Activated naive CD4-positive, alpha-beta T cell treated with anti-CD3 and anti-CD28 coated beads for 36 hours (primary cell): ENCODE measurements at regions of chr22 and their contacts with region 1.

Region 1: DNA sequence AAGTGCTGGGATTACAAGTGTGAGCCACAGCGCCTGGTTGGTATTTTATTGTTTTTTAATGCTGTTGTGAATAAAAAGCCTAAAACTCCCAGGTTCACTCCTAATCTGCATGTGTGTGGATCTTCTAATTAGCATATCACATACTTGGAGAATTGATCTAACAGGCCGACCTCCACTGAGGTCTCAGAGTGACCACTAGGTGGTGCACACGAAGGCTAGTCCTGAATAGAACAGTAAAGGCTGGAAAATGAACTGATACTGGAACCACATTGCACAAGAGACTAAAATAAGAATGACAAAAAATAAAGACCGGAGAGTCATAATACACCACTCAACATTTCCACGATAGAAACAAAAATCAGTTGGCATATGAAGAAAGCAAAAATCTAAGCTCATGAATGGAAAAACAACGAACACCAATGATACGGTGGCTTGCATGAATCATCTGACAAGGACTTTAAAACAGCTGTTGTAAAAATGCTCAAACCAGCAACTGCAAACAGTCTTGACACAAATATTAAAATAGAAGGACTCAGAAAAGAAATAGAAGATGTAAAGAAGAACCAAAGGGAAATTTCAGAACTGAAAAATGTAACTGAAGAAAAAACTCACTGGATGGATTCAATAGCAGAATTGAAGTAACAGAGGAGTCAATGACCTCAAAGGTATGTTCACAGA is 19.2 kb downstream of the PIM3 start:
- DNase-seq: peak; percentile 58
- H3K4me3 Mint-ChIP-seq: no peak overlapping the region
- H3K27ac Mint-ChIP-seq: peak overlapping the region; percentile 65
- H3K4me1 Mint-ChIP-seq: peaks cover 47% of the 10 kb centered on the region
- H3K27me3 Mint-ChIP-seq: peaks cover 2% of the 10 kb centered on the region

Region 2: DNA sequence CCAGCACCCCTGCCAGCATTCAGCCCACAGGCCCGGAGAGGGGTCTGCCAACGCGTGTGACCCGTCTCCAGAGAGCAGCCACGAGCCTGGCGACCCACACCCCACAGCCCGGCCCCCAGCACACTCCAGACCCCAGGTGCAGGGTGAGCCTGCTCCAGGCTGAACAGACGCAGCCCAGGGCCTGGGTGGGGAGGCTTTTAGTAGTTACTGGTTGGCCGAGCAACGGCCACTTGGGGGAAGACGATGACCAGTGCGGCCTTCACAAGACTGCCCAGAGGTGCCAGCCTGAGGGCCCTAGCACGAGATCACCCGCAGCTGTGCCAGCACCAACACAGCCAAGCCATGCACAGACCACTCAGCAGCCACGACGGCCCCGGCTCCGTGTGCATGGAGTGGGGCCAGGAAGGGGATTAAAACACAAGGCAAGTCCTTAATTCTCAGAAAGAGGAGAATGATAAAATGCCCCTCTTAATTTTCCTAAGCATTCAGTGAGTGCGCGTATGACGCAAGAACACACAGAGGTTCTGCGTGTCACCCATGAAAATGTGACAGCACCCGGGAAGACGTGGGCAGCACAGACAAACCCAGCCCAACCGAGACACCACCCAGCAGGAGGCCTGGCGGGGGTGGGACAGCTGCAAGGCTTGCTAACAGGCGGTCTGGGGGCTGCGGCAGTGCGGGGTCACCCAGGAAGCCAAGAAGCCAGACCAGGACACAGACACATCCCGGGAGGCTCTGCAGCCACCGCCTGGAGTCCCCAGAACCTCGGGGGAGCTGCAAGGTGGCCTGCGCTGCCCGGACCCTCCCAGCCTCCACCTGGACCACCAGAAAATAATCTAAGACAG is 199.7 kb before region 1 on chr22:
- CTCF ChIA-PET with region 1: no interaction called
- intact Hi-C with region 1: no loop called
- DNase-seq: no peak
- H3K4me3 Mint-ChIP-seq: no peak overlapping the region
- H3K27ac Mint-ChIP-seq: peak overlapping the region; percentile 30
- H3K4me1 Mint-ChIP-seq: peaks cover 8% of the 10 kb centered on the region
- H3K27me3 Mint-ChIP-seq: no peaks in the 10 kb centered on the region

Region 3: GRCh38 chr22:49838771-49839717 is 140.7 kb before region 1 on chr22:
- CTCF ChIA-PET with region 1: no interaction called
- intact Hi-C with region 1: loop called (anchors 5 kb)
- DNase-seq: peak; percentile 90
- H3K4me3 Mint-ChIP-seq: peak overlapping the region; percentile 67
- H3K27ac Mint-ChIP-seq: peak overlapping the region; percentile 85
- H3K4me1 Mint-ChIP-seq: peaks cover 31% of the 10 kb centered on the region
- H3K27me3 Mint-ChIP-seq: no peaks in the 10 kb centered on the region

Region 4: GRCh38 chr22:49936018-49936952 is 43.4 kb before region 1 on chr22:
- CTCF ChIA-PET with region 1: interaction called, 3 read pairs
- intact Hi-C with region 1: loop called (anchors 2 kb)
- DNase-seq: peak; percentile 99
- H3K4me3 Mint-ChIP-seq: peak overlapping the region; percentile 57
- H3K27ac Mint-ChIP-seq: peak overlapping the region; percentile 90
- H3K4me1 Mint-ChIP-seq: peaks cover 33% of the 10 kb centered on the region
- H3K27me3 Mint-ChIP-seq: no peaks in the 10 kb centered on the region

Region 5: GRCh38 chr22:49960159-49961004 is 19.3 kb before region 1 on chr22 and contains the start of gene PIM3:
- CTCF ChIA-PET with region 1: interaction called, 3 read pairs
- intact Hi-C with region 1: loop called (anchors 2 kb)
- DNase-seq: peak; percentile 94
- H3K4me3 Mint-ChIP-seq: peak within 1 kb of the TSS; percentile 91
- H3K27ac Mint-ChIP-seq: peak within 1 kb of the TSS; percentile 94
- H3K4me1 Mint-ChIP-seq: peaks cover 23% of the 10 kb centered on the region
- H3K27me3 Mint-ChIP-seq: no peaks in the 10 kb centered on the region
- total RNA-seq, gene PIM3: 202 to 210 TPM

Region 6: DNA sequence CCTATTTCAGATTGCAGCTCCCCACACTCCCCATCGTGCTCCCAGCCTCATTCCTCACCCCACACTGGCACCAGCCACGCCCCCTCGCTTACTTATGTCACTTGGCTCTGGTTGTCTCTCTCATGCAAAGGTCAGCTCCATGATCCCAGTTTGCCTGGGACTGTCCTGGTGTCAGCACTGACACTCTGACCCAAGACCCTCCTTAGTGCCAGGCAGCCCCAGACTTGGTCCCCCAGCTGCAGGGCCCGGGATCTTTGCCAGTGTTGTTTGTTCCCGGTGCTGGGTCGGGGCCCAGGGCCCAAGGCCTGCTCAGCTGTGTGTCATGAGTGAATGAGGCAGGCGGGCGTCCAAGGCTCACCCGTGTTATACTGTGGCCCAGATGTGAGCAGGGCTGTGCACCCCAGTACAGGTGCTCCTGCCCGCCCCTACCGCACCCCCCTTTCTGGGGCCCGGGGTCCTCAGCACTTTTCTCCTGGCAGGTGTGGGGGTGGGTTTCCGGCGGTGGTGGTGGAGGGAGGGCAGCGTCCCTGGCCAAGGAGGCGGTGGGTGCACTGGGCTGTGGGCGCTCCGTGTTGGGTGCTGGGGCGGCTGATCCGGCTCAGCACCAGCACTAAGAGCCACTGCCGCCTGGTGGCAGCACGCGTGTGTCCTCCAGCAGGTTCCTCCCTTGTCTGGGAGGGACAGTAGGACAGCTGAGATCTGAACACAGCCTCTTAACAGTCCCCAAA is 13.4 kb after region 1 on chr22:
- CTCF ChIA-PET with region 1: interaction called, 22 read pairs
- intact Hi-C with region 1: loop called (anchors 2 kb)
- DNase-seq: peak; percentile 85
- H3K4me3 Mint-ChIP-seq: no peak overlapping the region
- H3K27ac Mint-ChIP-seq: peak overlapping the region; percentile 19
- H3K4me1 Mint-ChIP-seq: peaks cover 4% of the 10 kb centered on the region
- H3K27me3 Mint-ChIP-seq: no peaks in the 10 kb centered on the region

Region 7: DNA sequence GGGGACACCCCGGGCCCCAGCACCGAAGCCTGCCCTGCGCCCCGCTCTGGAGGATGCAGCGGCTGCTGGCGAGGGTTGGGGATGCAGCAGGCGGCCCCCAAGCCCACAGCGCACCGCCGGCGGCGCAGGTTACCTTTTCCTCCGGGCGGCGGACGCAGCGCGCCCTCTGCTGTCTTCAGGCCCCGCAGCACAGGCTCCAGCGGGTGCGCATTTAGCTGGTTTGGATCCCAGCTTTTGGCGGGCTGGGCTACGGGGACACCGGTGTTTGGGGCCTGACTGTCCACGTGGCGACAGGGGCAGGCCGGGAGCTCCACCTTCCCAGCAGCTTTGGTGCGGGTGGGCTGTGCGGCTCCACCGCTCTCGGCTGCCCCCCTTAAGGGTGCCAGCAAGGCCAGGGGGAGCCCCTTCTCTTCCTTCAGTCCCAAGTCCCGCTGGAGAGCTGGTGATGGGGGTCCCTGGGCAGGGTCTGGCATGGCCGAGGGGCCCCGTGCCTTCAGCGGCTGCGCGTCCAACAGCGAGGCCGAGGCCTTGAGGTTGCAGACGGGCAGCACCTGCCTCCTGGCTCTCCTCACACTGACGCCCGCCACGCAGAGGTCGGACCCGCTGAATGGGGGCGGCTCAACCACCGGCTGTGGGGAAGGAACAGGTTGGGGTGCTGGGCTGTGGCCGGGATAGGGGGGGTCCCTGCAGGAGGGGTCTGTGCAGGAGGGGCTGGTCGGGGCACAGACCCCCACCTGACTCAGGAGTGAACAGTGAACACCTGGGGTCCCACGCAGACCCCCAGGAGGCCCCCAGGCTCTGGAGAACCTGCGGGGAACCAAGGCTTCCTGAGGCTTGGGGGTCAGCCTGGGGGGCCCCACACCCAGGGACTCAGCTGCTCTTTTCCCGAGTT is 50.8 kb after region 1 on chr22:
- CTCF ChIA-PET with region 1: interaction called, 11 read pairs
- intact Hi-C with region 1: loop called (anchors 2 kb)
- DNase-seq: peak; percentile 93
- H3K4me3 Mint-ChIP-seq: no peak overlapping the region
- H3K27ac Mint-ChIP-seq: no peak overlapping the region
- H3K4me1 Mint-ChIP-seq: peaks cover 13% of the 10 kb centered on the region
- H3K27me3 Mint-ChIP-seq: peaks cover 21% of the 10 kb centered on the region